PC-3 (cell line): ENCODE measurements at regions of chr11 and their contacts with region 1.

Region 1: DNA sequence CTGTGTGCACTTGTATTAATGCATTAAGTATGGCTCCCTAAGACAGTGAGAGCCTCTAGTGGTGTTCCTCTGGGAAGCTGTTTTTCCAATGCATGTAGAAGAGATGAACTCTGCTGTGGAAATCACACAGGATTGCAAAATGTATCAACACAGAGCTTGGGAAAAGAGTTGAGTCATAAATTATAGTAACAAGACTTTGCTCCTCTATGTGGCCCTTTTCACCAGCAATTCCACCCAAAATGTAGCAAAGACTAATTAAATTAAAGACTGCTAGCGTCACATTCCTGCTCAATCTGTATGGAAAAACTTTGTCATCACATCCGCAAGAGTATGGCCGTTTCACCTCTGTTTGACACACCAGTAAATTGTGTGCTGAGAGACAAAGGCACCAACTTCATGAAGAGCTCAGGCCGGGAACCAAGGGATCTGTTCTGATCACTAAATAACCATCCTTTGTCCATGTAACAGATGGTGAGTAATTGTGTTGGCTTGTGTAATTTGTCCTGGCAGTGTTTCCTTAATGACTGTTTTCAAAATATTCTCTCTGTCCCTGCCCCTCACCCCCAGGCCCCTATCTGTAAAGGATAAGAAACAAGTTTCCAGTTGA is 209.2 kb upstream of the SORL1-AS1 start:
- DNase-seq: peak; percentile 51
- ATAC-seq: peak; percentile 45
- H3K4me3 ChIP-seq: no peak overlapping the region
- H3K27ac ChIP-seq: no peak overlapping the region
- H3K4me1 ChIP-seq: peaks cover 13% of the 10 kb centered on the region; the same call in 1 of the 2 replicates
- H3K27me3 ChIP-seq: no peaks in the 10 kb centered on the region
- CTCF ChIP-seq: no peak

Region 2: DNA sequence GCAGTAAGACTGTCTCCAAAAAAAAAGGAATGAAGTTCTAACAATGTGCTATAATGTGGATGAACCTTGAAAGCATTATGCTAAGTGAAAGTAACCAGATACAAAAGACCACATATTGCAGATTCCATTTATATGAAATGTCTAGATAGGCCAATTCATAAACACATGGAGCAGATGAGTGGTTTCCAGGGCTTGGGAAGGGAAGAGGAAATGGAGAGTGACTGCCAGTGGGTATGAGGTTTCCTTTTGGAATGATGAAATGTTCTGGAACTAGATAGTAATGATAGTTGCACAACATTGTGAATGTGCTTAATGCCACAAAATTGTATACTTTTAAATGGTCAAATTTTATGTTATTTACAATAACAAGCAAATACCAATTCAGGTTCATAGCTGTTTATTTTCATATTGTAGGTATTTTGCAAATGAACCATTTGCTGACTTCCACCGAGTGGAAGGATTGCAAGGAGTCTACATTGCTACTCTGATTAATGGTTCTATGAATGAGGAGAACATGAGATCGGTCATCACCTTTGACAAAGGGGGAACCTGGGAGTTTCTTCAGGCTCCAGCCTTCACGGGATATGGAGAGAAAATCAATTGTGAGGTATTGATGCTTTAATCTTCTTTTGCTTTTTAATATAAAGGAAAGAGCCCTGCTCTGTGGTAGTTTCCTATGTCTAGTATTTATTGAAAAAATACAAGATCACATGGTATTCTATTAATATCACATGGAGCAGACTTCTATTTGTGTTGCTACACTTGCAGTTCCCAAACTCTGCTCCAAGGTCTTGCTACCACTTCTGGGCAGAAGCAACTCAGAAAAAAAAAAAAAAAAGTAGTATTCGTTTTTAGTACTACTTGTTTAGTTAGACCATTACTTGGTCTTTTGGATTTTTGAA is 141.5 kb before region 1 on chr11:
- CTCF ChIA-PET with region 1: no interaction called
- POLR2A ChIA-PET with region 1: no interaction called
- intact Hi-C with region 1: no loop called
- DNase-seq: peak; percentile 30
- ATAC-seq: no peak
- H3K4me3 ChIP-seq: no peak overlapping the region
- H3K27ac ChIP-seq: no peak overlapping the region
- H3K4me1 ChIP-seq: peaks cover 21% of the 10 kb centered on the region
- H3K27me3 ChIP-seq: no peaks in the 10 kb centered on the region
- CTCF ChIP-seq: no peak

Region 3: DNA sequence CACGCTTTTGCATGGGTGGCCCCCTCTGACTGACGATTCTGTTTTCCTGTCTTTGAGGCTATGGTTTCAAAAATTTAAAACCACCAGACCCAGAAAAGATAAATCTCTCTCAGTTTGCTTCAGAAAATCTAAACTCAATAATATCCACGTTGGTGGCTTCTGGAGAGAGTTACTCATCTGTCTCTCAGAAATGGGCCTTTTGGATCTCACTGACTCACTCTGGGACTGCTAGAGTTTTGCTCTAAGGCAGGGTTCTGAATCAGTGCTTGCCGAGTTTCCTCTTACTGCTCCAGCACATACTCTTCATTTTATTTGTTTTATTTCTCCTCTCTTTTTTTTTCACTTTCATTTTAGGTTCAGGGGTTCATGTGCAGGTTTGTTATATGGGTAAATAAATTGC is 148.3 kb after region 1 on chr11:
- CTCF ChIA-PET with region 1: no interaction called
- POLR2A ChIA-PET with region 1: no interaction called
- intact Hi-C with region 1: loop called (anchors 5 kb)
- DNase-seq: peak; percentile 73
- ATAC-seq: peak; percentile 90
- H3K4me3 ChIP-seq: no peak overlapping the region
- H3K27ac ChIP-seq: peak overlapping the region; percentile 41
- H3K4me1 ChIP-seq: peaks cover 15% of the 10 kb centered on the region
- H3K27me3 ChIP-seq: no peaks in the 10 kb centered on the region
- CTCF ChIP-seq: no peak